ENCODE measurements at regions of chr18 and their contacts with region 1.

Region 1: DNA sequence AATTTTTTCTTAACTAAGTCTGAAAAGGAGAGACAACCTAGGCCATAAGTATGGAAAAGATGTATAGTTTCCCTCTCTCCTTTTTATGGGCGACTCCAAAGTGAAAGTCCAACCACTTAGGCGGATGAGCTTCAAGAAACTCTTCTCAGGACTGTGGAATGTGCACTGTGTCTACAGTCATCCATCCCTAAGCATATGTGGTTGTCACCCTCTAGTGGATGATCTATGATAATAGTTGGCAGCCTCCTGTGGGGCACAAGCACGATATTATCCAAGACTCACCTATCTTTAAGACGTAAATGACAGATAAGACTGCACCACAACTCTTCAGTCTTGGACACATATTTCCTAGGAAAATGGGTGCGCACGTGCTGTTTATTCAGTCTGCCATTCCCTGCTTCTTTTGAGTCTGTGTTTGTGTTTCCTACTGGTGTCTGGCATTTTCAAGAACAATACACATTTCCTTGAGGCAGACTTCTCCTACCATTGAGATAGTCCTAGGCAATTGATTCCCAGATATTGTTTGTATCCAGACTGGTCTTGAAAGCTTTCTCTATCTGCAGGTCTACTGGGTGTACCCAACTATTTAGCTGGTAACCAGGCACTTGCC is 145.5 kb upstream of the CTAGE1 start:
- DNase-seq: peak in 1 of 2 donors; percentile 70
- ATAC-seq: peak; percentile 68 to 83 (median 81)
- H3K4me3 ChIP-seq: no peak overlapping the region
- H3K4me3 Mint-ChIP-seq: no peak overlapping the region
- H3K27ac ChIP-seq: no peak overlapping the region
- H3K27ac Mint-ChIP-seq: no peak overlapping the region
- H3K4me1 ChIP-seq: peaks cover 15% of the 10 kb centered on the region
- H3K4me1 Mint-ChIP-seq: peaks cover 11 to 20% of the 10 kb centered on the region in 2 donors
- H3K27me3 ChIP-seq: peaks cover 35% of the 10 kb centered on the region
- H3K27me3 Mint-ChIP-seq: peaks cover 27 to 70% of the 10 kb centered on the region in 2 donors
- CTCF ChIP-seq: peak; percentile 89

Region 2: DNA sequence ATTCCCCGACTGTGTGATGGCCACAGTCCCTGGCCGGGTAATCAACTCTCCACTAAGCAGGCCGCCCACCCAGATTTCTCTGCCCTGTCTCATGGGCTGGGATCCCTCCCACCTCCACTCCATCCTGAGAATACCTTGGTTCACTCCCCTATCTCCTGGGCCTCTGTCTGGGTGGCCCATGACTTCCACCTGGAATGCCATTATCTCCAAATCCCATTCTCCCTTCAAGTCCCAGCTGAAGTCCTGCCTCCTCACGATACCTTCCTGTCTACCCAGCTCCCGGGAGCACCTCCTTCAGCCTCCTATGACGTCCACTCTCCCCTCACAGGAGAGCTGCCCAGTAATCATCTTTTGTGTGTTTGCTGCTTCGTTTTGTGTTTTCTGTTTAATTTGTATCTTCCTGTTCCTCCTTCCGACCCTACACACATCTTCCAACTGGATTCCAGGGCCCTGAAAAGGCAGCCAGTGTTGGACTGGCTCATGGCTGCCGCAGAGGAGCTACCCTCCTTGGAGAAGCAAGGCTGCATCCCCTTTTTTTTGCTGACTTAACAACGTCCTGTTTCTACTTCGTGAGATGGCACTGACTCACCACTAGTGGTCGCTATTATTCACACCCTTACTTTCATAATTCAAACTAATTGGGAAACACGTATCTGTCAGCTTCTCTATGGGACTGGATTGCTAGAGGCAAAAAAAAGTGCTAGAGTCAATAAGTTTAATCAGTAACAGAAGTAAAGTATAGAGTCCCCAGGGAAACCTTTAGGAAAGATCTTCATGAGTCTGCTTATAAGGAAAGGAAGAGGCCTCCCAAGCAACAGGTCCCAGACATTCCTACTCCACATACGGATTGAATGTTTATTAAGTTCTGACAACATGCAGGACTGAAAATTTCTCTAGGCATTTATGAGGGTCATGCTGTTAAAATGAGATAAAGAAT is 565.7 kb before region 1 on chr18:
- intact Hi-C with region 1: loop called (anchors 1 kb)
- DNase-seq: peak in 1 of 2 donors; percentile 55
- ATAC-seq: peak; percentile 73 to 88 (median 77)
- H3K4me3 ChIP-seq: no peak overlapping the region
- H3K4me3 Mint-ChIP-seq: no peak overlapping the region
- H3K27ac ChIP-seq: no peak overlapping the region
- H3K27ac Mint-ChIP-seq: peak overlapping the region in 1 of 2 donors; percentile 3
- H3K4me1 ChIP-seq: no peaks in the 10 kb centered on the region
- H3K4me1 Mint-ChIP-seq: peaks cover 5 to 7% of the 10 kb centered on the region in 2 donors
- H3K27me3 ChIP-seq: no peaks in the 10 kb centered on the region
- H3K27me3 Mint-ChIP-seq: peaks cover 5 to 19% of the 10 kb centered on the region in 2 donors
- CTCF ChIP-seq: peak; percentile 83

Region 3: GRCh38 chr18:22238036-22238435 is 325.2 kb before region 1 on chr18:
- intact Hi-C with region 1: loop called (anchors 1 kb)
- DNase-seq: peak; percentile 57 to 74
- ATAC-seq: peak; percentile 94 to 100 (median 97)
- H3K4me3 ChIP-seq: no peak overlapping the region
- H3K4me3 Mint-ChIP-seq: peak overlapping the region; percentile 11
- H3K27ac ChIP-seq: no peak overlapping the region
- H3K27ac Mint-ChIP-seq: peak overlapping the region; percentile 61 to 75
- H3K4me1 ChIP-seq: peaks cover 15% of the 10 kb centered on the region
- H3K4me1 Mint-ChIP-seq: peaks cover 16 to 20% of the 10 kb centered on the region in 2 donors
- H3K27me3 ChIP-seq: no peaks in the 10 kb centered on the region
- H3K27me3 Mint-ChIP-seq: peaks cover 18 to 30% of the 10 kb centered on the region in 2 donors
- CTCF ChIP-seq: peak; percentile 63

Region 4: DNA sequence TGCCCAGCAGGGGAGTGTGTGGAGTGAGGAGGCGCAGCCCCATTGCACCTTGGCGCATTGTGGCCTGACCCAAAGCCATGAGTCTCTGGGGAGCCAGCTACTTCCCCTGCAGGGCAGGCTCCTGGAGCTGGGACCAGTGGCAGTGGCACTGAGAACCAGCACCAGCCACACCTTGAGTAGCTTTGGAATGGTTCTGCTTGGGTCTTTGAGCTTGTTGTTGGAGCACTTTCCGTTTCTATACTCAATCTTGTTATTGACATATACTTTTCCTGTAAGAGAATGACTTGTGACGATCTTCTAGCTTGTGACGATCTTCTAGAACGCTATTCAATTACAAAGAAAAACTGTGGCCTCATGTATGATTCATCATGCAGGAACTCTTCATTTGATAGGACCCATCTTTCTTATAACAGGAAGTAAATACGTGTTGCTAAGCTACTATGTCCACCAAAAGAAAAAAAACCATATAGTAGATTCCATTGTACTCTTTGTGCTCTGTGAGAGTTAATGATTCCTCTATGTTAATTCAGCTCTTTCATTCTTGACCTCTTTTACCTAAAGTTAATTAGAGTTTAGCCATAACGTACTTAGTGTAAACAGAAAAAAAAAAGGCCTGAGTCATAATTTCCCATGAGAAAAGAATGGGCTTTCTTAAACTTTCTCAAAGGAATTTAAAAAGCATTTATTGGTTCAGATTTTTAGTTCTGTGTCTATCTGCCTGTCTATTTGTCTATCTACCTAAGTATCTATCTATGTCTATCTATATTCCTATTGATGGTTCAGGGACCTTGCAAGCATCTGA is 280.7 kb before region 1 on chr18:
- intact Hi-C with region 1: loop called (anchors 2 kb)
- DNase-seq: peak; percentile 72 to 80
- ATAC-seq: peak; percentile 83 to 92 (median 92)
- H3K4me3 ChIP-seq: no peak overlapping the region
- H3K4me3 Mint-ChIP-seq: peak overlapping the region; percentile 62
- H3K27ac ChIP-seq: peak overlapping the region; percentile 89
- H3K27ac Mint-ChIP-seq: peak overlapping the region; percentile 94 to 96
- H3K4me1 ChIP-seq: peaks cover 11% of the 10 kb centered on the region
- H3K4me1 Mint-ChIP-seq: peaks cover 27 to 40% of the 10 kb centered on the region in 2 donors
- H3K27me3 ChIP-seq: no peaks in the 10 kb centered on the region
- H3K27me3 Mint-ChIP-seq: peaks cover 3 to 7% of the 10 kb centered on the region in 2 donors
- CTCF ChIP-seq: no peak

Region 5: DNA sequence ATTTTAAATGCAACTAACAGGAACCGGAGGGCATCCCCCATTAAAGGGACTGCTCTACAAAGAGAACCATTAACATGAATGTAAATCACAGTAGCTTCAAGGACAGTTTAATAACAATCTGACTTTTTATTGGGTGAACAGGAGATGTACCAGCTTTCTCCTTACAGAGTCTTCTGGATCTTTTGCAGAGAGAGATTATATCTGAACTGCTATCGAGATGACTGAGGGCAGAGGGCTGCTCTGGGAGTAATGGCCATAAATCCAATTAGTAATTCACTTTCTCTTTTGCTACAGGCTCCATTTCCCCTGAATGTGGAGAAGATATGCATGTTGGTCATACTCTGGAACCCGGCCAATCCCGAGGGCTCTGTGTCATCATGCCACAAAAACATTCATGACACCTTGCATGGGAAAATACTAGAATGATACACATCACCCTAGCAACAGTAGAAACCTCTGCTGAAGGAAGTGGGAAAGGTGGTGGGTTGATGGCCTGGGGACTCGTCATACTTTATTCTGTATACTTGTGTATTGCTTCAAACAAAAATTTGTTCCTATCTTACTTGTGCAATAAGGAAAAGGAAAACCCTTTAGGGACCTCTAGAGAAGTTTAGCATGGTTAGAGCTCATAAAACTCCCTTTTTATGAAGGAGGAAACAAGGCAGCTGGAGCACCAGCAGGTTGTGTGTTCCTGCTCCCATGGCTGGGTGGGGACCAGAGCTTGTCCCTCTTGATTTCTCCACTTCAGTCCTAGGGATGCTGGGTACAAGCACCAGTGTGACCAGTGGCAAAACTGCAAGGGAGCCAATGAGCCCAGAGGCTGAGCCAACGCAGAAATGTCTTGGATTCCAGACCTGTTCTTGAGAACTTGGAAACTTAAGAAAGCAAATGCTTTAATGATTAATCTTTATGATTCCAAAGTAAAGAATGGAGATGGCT is 171.5 kb before region 1 on chr18:
- intact Hi-C with region 1: loop called (anchors 5 kb)
- DNase-seq: peak; percentile 77 to 84
- ATAC-seq: peak; percentile 66 to 83 (median 76)
- H3K4me3 ChIP-seq: no peak overlapping the region
- H3K4me3 Mint-ChIP-seq: peak overlapping the region; percentile 77
- H3K27ac ChIP-seq: peak overlapping the region; percentile 76
- H3K27ac Mint-ChIP-seq: peak overlapping the region; percentile 94 to 95
- H3K4me1 ChIP-seq: peaks cover 29% of the 10 kb centered on the region
- H3K4me1 Mint-ChIP-seq: peaks cover 78% of the 10 kb centered on the region in 2 donors
- H3K27me3 ChIP-seq: no peaks in the 10 kb centered on the region
- H3K27me3 Mint-ChIP-seq: no peaks in the 10 kb centered on the region
- CTCF ChIP-seq: no peak

Region 6: DNA sequence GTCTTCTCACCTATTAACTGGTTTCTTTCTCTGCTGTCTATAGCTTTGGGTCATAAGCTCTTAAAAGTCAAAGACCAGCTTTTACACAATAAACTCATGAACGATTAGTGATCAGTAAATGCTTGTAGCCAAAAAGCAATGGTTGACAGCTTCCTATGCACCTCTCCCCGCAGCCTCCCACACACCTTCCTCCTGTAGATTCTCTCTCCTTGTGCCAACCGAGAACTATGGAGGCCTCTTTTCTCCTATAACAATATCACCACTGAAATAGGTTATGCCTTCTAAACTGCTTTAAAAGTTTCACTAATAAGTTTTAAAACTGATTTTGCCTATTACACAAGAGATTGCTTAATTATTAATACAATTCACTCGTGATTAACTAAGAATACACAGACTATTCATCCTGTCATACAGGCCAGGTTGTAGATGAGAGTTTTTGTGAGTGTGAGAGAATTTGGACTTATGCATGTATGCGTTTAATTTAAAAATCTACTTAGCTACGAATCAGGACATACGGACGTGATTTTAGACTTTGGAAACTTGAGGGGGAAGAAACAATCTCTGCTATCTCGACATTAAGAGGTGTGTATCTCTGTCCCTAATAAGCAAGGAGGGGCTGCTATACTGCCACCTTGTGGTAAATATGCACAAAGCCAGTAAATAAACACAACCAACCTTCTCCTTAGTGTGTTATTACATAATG is 140.8 kb after region 1 on chr18:
- intact Hi-C with region 1: loop called (anchors 5 kb)
- DNase-seq: peak in 1 of 2 donors; percentile 57
- ATAC-seq: peak; percentile 53 to 73 (median 60)
- H3K4me3 ChIP-seq: no peak overlapping the region
- H3K4me3 Mint-ChIP-seq: no peak overlapping the region
- H3K27ac ChIP-seq: no peak overlapping the region
- H3K27ac Mint-ChIP-seq: no peak overlapping the region
- H3K4me1 ChIP-seq: no peaks in the 10 kb centered on the region
- H3K4me1 Mint-ChIP-seq: no peaks in the 10 kb centered on the region
- H3K27me3 ChIP-seq: no peaks in the 10 kb centered on the region
- H3K27me3 Mint-ChIP-seq: peaks cover 4 to 23% of the 10 kb centered on the region in 2 donors
- CTCF ChIP-seq: peak; percentile 81

Measured in natural killer cell (primary cell).